ENCODE measurements at regions of chr9 and their contacts with region 1.

Region 1: DNA sequence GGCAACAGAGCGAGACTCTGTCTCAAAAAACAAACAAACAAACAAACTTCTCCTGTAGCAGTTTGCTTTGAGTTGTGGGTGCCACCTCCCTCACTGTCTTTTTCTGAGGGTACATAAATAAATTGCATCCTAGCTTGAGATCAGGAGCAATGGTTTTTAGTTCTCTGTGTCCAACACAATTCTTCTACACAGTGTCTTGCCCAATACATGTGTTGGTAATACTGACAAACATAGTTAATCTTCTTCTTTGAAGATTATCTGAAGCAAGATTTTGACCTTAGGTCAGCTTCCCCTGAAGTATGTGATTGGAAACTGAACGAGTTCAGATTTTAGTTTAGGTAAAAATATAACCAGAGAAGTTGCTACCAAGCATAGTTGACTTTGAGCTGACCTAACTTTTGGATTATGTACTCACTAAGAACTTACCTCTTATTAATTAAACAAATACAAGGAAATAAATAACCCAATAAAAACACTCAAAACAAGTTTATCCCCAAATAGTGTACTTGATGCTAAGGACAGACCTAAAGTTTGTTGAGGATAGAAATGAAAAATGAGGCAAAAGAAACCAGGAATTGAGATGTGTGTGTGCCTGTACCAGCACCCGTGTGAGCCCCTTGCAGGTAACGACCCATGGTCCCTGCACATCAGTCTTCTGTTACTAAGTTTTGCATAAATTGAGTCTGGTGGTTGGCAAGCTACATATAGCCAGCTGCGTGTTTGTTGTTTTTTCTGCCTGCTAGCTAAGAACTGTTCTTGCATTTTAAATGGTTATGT is 16.2 kb downstream of the TJP2 start:
- DNase-seq: no peak
- H3K4me3 ChIP-seq: no peak overlapping the region
- H3K27ac ChIP-seq: no peak overlapping the region
- H3K4me1 ChIP-seq: no peaks in the 10 kb centered on the region
- H3K27me3 ChIP-seq: no peaks in the 10 kb centered on the region
- CTCF ChIP-seq: no peak

Region 2: GRCh38 chr9:69012696-69013381 is 177.4 kb before region 1 on chr9:
- CTCF ChIA-PET with region 1: no interaction called
- POLR2A ChIA-PET with region 1: no interaction called
- intact Hi-C with region 1: no loop called
- DNase-seq: no peak
- H3K4me3 ChIP-seq: no peak overlapping the region
- H3K27ac ChIP-seq: no peak overlapping the region
- H3K4me1 ChIP-seq: no peaks in the 10 kb centered on the region
- H3K27me3 ChIP-seq: peaks cover 30% of the 10 kb centered on the region
- CTCF ChIP-seq: no peak

Region 3: GRCh38 chr9:69056191-69056815 is 134.0 kb before region 1 on chr9:
- CTCF ChIA-PET with region 1: interaction called, 18 read pairs
- POLR2A ChIA-PET with region 1: no interaction called
- intact Hi-C with region 1: loop called (anchors 1 kb)
- DNase-seq: no peak
- H3K4me3 ChIP-seq: no peak overlapping the region
- H3K27ac ChIP-seq: no peak overlapping the region
- H3K4me1 ChIP-seq: no peaks in the 10 kb centered on the region
- H3K27me3 ChIP-seq: no peaks in the 10 kb centered on the region
- CTCF ChIP-seq: no peak

Region 4: GRCh38 chr9:69339620-69340019 is 149.3 kb after region 1 on chr9:
- CTCF ChIA-PET with region 1: no interaction called
- POLR2A ChIA-PET with region 1: no interaction called
- intact Hi-C with region 1: no loop called
- DNase-seq: no peak
- H3K4me3 ChIP-seq: no peak overlapping the region
- H3K27ac ChIP-seq: no peak overlapping the region
- H3K4me1 ChIP-seq: no peaks in the 10 kb centered on the region
- H3K27me3 ChIP-seq: peaks cover 6% of the 10 kb centered on the region
- CTCF ChIP-seq: no peak

Region 5: GRCh38 chr9:69364510-69365150 is 174.4 kb after region 1 on chr9:
- CTCF ChIA-PET with region 1: interaction called, 12 read pairs
- POLR2A ChIA-PET with region 1: no interaction called
- intact Hi-C with region 1: no loop called
- DNase-seq: no peak
- H3K4me3 ChIP-seq: no peak overlapping the region
- H3K27ac ChIP-seq: no peak overlapping the region
- H3K4me1 ChIP-seq: no peaks in the 10 kb centered on the region
- H3K27me3 ChIP-seq: peaks cover 37% of the 10 kb centered on the region
- CTCF ChIP-seq: no peak

Region 6: DNA sequence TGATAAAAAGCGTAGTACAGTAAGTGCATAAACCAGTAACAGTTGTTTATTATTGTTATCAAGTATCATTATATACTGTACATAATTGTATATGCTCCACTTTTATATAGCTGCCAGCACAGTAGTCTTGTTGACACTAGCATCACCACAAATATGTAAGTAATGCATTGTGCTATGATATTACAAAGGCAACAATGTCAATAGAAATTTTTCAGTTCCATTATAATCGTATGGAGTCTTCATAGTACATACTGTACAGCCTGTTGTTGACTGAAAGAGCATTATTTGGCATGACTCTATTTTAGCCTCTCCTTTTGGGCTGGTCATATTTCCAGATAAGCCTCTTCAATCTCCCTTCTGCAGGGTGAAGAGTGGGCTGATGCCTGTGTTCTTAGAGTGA is 670.7 kb after region 1 on chr9:
- CTCF ChIA-PET with region 1: no interaction called
- POLR2A ChIA-PET with region 1: interaction called, 12 read pairs
- intact Hi-C with region 1: no loop called
- DNase-seq: no peak
- H3K4me3 ChIP-seq: no peak overlapping the region
- H3K27ac ChIP-seq: no peak overlapping the region
- H3K4me1 ChIP-seq: no peaks in the 10 kb centered on the region
- H3K27me3 ChIP-seq: no peaks in the 10 kb centered on the region
- CTCF ChIP-seq: no peak